ENCODE measurements at regions of chr6 and their contacts with region 1.

Region 1: GRCh38 chr6:15691250-15691869 is 28.5 kb upstream of the DTNBP1 start:
- DNase-seq: peak; percentile 82 to 96
- H3K4me3 ChIP-seq: no peak overlapping the region
- CTCF ChIP-seq: peak in 2 of 3 donors; percentile 98 to 99
- POLR2A ChIP-seq: no peak

Region 2: DNA sequence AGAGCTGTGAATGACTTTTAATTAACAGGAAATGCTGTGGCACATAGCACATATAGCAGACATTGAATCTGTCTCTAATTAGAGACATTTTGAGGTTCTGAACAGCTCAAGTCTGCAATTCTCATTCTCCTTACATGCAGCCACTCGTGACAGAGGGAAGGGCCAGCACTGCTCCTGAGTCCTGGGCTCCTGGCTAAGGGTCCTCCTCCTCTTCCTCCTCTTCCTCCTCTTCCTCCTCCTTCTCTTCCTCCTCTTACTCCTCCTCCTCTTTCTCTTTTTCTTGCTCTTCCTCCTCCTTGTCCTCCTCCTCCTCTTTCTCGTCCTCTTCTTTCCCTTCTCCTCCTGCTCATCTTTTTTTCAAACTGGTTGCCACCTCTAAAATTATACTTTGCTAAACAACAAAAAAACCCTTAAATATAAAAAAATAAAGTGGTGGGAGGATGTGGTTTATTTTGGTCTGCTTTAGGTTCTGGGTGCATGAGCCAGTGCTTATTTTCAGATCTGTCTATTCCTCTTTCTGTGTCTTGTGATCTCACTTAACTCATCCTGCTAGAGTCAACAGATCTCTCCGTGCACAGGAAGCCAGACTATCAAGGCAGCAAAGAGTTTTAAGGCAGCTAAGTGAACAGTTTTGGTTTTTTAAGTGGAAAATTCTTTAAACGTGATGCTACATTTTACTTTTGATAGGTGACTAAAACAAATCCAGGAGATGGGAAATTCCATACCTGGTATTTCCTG is 1414.5 kb before region 1 on chr6:
- intact Hi-C with region 1: no loop called
- DNase-seq: peak in 1 of 2 donors; percentile 39
- H3K4me3 ChIP-seq: no peak overlapping the region
- CTCF ChIP-seq: no peak
- POLR2A ChIP-seq: no peak

Region 3: GRCh38 chr6:15653581-15653980 is 37.8 kb before region 1 on chr6:
- intact Hi-C with region 1: no loop called
- DNase-seq: no peak
- H3K4me3 ChIP-seq: no peak overlapping the region
- CTCF ChIP-seq: no peak
- POLR2A ChIP-seq: no peak

Region 4: GRCh38 chr6:16183187-16183664 is 491.9 kb after region 1 on chr6:
- intact Hi-C with region 1: loop called (anchors 10 kb)
- DNase-seq: no peak
- H3K4me3 ChIP-seq: no peak overlapping the region
- CTCF ChIP-seq: peak in 1 of 3 donors; percentile 63
- POLR2A ChIP-seq: no peak

Region 5: DNA sequence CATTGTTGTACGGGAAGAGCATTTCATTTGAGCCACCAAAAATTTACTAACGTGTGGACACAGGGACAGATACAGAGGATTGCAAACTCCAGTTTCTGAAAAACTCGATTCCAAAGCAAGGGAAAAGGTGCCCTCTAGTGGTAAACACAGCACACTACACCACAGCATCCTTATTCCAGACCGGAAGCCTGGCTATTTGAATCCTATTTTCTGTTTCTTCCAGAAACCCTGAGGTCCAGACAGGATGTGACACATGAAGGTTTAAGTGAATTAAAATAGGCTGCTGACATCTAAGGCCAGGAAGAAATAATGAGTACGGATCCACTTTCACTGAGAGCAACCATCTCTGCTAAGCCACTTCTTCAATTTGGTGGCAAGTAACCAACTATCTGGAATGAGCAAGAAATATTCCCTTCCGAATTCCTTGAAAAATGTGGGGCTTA is 515.3 kb after region 1 on chr6:
- intact Hi-C with region 1: loop called (anchors 5 kb)
- DNase-seq: peak in 1 of 2 donors; percentile 78
- H3K4me3 ChIP-seq: no peak overlapping the region
- CTCF ChIP-seq: peak; percentile 44 to 95 (median 78)
- POLR2A ChIP-seq: no peak

Measured in lower leg skin (tissue), 4 donors.